ENCODE measurements at regions of chr3 and their contacts with region 1.

Region 1: GRCh38 chr3:128584412-128585020 is 66.1 kb downstream of the RPN1 start:
- DNase-seq: peak; percentile 83
- H3K4me3 ChIP-seq: no peak overlapping the region
- H3K27ac ChIP-seq: no peak overlapping the region
- H3K4me1 ChIP-seq: no peaks in the 10 kb centered on the region
- H3K27me3 ChIP-seq: peaks cover 8 to 19% of the 10 kb centered on the region in 2 experiments
- CTCF ChIP-seq: peak; percentile 90 to 92
- POLR2A ChIP-seq: no peak

Region 2: GRCh38 chr3:127556565-127556964 is 1028.0 kb before region 1 on chr3:
- CTCF ChIA-PET with region 1: no interaction called
- POLR2A ChIA-PET with region 1: no interaction called
- dilution Hi-C with region 1: no loop called
- intact Hi-C with region 1: no loop called
- DNase-seq: no peak
- H3K4me3 ChIP-seq: no peak overlapping the region
- H3K27ac ChIP-seq: no peak overlapping the region
- H3K4me1 ChIP-seq: peaks cover 3% of the 10 kb centered on the region
- H3K27me3 ChIP-seq: peaks cover 5% of the 10 kb centered on the region in 2 experiments
- CTCF ChIP-seq: peak in 1 of 2 donors; percentile 8
- POLR2A ChIP-seq: no peak

Region 3: GRCh38 chr3:128170805-128171516 is 413.6 kb before region 1 on chr3:
- CTCF ChIA-PET with region 1: interaction called, 12 read pairs
- POLR2A ChIA-PET with region 1: no interaction called
- dilution Hi-C with region 1: no loop called
- intact Hi-C with region 1: loop called (anchors 1 kb)
- DNase-seq: peak; percentile 78
- H3K4me3 ChIP-seq: no peak overlapping the region
- H3K27ac ChIP-seq: no peak overlapping the region
- H3K4me1 ChIP-seq: no peaks in the 10 kb centered on the region
- H3K27me3 ChIP-seq: no peaks in the 10 kb centered on the region
- CTCF ChIP-seq: peak; percentile 73 to 83
- POLR2A ChIP-seq: no peak

Region 4: GRCh38 chr3:128307029-128307633 is 277.4 kb before region 1 on chr3:
- CTCF ChIA-PET with region 1: interaction called, 16 read pairs
- POLR2A ChIA-PET with region 1: no interaction called
- dilution Hi-C with region 1: no loop called
- intact Hi-C with region 1: no loop called
- DNase-seq: peak; percentile 16
- H3K4me3 ChIP-seq: no peak overlapping the region
- H3K27ac ChIP-seq: no peak overlapping the region
- H3K4me1 ChIP-seq: no peaks in the 10 kb centered on the region
- H3K27me3 ChIP-seq: no peaks in the 10 kb centered on the region
- CTCF ChIP-seq: peak in 1 of 2 donors; percentile 10
- POLR2A ChIP-seq: no peak

Region 5: DNA sequence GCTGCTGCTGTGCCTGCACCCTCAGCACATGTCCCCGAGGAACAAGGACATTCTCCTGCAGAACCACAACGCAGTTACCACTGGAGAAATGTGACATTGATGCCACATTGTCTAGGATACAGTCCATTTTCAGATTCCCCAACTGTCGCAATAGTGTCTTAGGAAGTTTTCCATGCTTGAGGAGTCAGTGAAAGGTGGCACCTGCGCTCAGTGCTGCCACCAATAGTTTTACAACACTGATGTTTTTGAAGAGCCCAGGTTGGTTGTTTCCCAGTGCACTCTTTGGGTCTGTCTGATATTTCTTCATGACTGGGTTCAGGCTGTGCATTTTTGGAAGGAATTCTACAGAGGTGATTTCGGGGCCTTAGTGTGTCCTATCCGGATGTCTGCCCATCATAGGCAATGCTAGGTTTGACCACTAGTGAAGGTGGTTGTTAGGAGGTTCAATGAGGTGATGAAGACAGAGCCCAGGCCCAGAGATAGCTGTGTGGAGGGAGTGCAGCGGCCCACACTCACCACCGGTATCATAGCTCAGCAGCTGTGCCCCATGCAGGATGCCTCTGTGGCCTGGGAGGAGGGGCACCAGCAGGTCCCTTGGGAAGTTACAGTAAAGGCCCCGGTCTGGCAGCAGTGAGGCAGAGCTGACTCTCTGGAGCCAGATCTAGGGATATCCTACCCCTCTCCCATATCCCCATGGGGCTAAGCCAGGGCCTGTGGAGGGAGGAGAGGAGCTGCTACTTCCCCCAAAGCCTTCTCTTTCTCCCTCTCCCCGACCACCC is 214.5 kb before region 1 on chr3:
- CTCF ChIA-PET with region 1: no interaction called
- POLR2A ChIA-PET with region 1: no interaction called
- dilution Hi-C with region 1: no loop called
- intact Hi-C with region 1: no loop called
- DNase-seq: no peak
- H3K4me3 ChIP-seq: no peak overlapping the region
- H3K27ac ChIP-seq: no peak overlapping the region
- H3K4me1 ChIP-seq: peaks cover 3% of the 10 kb centered on the region
- H3K27me3 ChIP-seq: no peaks in the 10 kb centered on the region
- CTCF ChIP-seq: no peak
- POLR2A ChIP-seq: no peak

Region 6: GRCh38 chr3:128426128-128426921 is 158.2 kb before region 1 on chr3:
- CTCF ChIA-PET with region 1: interaction called, 46 read pairs
- POLR2A ChIA-PET with region 1: no interaction called
- dilution Hi-C with region 1: loop called (anchors 25 kb)
- intact Hi-C with region 1: loop called (anchors 1 kb)
- DNase-seq: peak; percentile 41
- H3K4me3 ChIP-seq: no peak overlapping the region
- H3K27ac ChIP-seq: no peak overlapping the region
- H3K4me1 ChIP-seq: peaks cover 3% of the 10 kb centered on the region
- H3K27me3 ChIP-seq: peaks cover 0 to under 1% of the 10 kb centered on the region in 2 experiments
- CTCF ChIP-seq: peak; percentile 75 to 96
- POLR2A ChIP-seq: no peak

Region 7: GRCh38 chr3:128470134-128470899 is 114.2 kb before region 1 on chr3:
- CTCF ChIA-PET with region 1: no interaction called
- POLR2A ChIA-PET with region 1: no interaction called
- dilution Hi-C with region 1: no loop called
- intact Hi-C with region 1: no loop called
- DNase-seq: no peak
- H3K4me3 ChIP-seq: no peak overlapping the region
- H3K27ac ChIP-seq: no peak overlapping the region
- H3K4me1 ChIP-seq: no peaks in the 10 kb centered on the region
- H3K27me3 ChIP-seq: peaks cover 6 to 18% of the 10 kb centered on the region in 2 experiments
- CTCF ChIP-seq: no peak
- POLR2A ChIP-seq: no peak

Region 8: DNA sequence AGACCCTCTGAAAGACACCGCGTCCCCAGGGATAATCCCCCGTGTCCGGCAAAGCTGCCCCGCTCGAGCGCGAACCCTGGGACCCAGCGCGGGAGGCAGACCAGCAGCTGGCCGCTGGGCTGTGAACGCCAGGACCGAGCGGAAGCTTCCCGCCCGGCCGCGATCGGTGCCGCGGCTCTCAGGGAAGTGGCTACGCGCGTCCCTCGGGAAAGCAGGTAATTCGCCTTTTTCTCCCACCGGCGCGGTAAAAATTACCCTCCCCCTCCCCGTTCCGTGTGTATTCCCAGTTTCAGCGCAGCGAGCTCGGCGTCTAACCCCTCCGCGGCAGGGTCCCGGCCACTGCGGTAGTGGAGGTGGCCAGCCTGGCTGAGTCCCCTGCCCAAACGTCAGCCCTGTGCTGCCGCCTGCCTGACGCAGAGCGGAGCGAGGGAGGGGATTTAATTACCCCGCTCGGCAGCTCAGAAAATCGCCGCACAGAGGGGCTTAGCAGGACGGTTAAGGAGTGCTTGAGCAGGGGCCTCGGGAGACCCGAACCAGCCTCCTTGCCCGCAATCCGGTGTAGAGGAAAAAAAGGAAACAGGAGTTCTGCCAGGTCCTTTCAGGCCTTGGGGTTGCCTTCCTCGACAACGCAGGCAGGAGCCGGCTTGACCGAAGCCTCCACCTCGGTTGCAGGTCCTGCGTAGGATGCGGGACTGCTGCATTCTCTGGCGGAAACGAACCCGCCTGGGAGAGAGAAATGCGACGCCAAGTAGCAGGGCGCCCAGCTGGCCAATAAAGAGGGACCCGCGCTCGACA is 94.5 kb before region 1 on chr3:
- CTCF ChIA-PET with region 1: interaction called, 12 read pairs
- POLR2A ChIA-PET with region 1: no interaction called
- dilution Hi-C with region 1: no loop called
- intact Hi-C with region 1: no loop called
- DNase-seq: peak; percentile 77
- H3K4me3 ChIP-seq: peak overlapping the region; percentile 77 to 95 (median 83)
- H3K27ac ChIP-seq: peak overlapping the region; percentile 97
- H3K4me1 ChIP-seq: peaks cover 15% of the 10 kb centered on the region
- H3K27me3 ChIP-seq: no peaks in the 10 kb centered on the region
- CTCF ChIP-seq: no peak
- POLR2A ChIP-seq: no peak

Region 9: DNA sequence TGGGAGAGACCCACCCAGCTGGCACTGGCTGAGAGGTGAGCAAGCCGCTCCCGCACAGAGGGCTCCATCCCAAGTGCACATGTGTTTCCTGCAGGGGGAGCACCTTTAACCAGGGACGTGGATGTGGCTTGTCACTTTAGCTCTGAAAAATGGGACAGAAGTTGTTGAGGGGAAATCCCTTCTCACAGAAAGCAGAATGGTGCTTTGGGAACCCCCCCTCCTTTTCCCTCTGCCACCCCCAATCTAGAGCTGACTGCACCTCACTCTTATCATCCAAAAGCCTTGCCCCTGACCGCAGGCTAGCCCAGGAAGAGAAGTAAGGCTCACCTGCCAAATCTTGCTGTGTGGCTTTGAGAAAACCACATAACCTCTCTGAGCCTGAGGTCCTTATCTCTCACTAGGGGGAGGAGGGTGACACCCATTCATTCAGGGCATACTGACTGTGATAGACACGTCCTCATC is 11.8 kb before region 1 on chr3:
- CTCF ChIA-PET with region 1: interaction called, 22 read pairs
- POLR2A ChIA-PET with region 1: no interaction called
- dilution Hi-C with region 1: no loop called
- intact Hi-C with region 1: no loop called
- DNase-seq: no peak
- H3K4me3 ChIP-seq: no peak overlapping the region
- H3K27ac ChIP-seq: no peak overlapping the region
- H3K4me1 ChIP-seq: peaks cover 22% of the 10 kb centered on the region
- H3K27me3 ChIP-seq: peaks cover 16 to 50% of the 10 kb centered on the region in 2 experiments
- CTCF ChIP-seq: peak; percentile 23 to 24
- POLR2A ChIP-seq: no peak

Region 10: DNA sequence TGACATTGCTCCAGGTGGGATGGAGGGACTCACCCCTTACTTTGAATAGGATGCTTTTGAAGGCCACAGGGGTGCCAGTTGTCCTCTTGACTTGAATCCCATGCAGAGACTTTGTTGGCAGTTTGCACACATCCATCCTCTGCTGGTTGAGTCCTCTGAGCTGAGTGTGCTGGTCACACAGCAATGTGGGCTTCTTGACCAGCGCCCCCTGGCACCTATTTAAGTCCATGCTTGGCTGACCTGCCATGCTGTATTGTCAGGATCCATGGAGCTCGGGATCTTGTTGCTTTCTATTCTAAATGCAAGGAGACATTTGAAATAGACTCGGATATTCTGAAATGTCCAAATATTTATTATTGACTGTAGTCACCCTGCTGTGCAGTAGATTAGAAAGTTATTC is 161.2 kb after region 1 on chr3:
- CTCF ChIA-PET with region 1: no interaction called
- POLR2A ChIA-PET with region 1: no interaction called
- dilution Hi-C with region 1: no loop called
- intact Hi-C with region 1: no loop called
- DNase-seq: no peak
- H3K4me3 ChIP-seq: no peak overlapping the region
- H3K27ac ChIP-seq: no peak overlapping the region
- H3K4me1 ChIP-seq: no peaks in the 10 kb centered on the region
- H3K27me3 ChIP-seq: no peaks in the 10 kb centered on the region
- CTCF ChIP-seq: no peak
- POLR2A ChIP-seq: no peak